BJ (cell line): ENCODE measurements at regions of chr10 and their contacts with region 1.

Region 1: GRCh38 chr10:15262036-15262713 is 93.7 kb upstream of the NMT2 start:
- DNase-seq: no peak
- H3K4me3 ChIP-seq: no peak overlapping the region
- H3K27me3 ChIP-seq: no peaks in the 10 kb centered on the region
- CTCF ChIP-seq: peak; percentile 45

Region 2: GRCh38 chr10:15370212-15370855 is 108.2 kb after region 1 on chr10:
- CTCF ChIA-PET with region 1: interaction called, 11 read pairs
- POLR2A ChIA-PET with region 1: no interaction called
- DNase-seq: no peak
- H3K4me3 ChIP-seq: peak overlapping the region; percentile 67
- H3K27me3 ChIP-seq: no peaks in the 10 kb centered on the region
- CTCF ChIP-seq: no peak